ENCODE measurements at regions of chr1 and their contacts with region 1.

Region 1: GRCh38 chr1:109099938-109100773 is 9.6 kb downstream of the TMEM167B start:
- DNase-seq: peak; percentile 98
- ATAC-seq: peak; percentile 94
- H3K4me3 Mint-ChIP-seq: peak overlapping the region; percentile 98
- H3K27ac Mint-ChIP-seq: peak overlapping the region; percentile 98
- H3K4me1 Mint-ChIP-seq: peaks cover 6% of the 10 kb centered on the region
- H3K27me3 Mint-ChIP-seq: no peaks in the 10 kb centered on the region

Region 2: DNA sequence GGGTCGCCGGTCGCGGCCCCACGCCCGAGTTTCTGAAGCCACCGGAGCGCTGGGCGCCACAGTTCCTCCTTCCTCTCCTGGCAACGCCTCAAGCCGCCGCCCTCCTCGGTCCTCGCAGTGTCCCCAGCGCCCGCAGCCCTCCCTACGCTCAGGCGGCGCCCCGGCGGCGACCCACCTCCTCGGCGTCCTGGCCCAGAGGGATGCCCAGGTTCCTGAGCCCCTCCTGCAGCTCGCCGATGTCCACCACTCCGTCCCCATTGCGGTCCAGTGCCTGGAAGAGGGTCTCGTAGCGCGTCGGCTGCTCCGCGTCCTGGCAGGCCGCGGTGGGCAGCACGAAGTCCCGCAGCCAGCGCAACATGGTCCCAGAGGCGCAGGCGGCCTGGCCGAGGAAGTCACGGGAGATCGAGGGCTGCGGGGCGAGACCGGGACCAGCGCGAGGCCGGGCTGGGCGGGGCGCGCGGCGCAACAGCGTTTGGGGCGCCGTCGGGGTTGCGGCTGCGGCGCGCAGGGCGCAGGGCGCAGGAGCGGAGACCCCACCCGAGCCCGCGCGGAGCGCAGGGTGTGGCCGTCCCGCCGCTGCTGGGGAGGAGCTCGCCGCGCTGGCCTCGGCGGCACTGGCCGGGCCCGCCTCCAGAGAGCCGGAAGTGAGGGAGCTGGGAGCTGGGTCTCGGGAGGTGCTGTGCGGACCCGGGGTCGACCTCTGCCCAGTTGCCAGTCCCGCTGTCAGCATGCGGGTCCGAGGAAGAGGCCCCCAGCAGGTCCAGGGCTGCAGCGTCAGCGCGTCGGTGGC is 900.2 kb before region 1 on chr1 and contains the start of gene SLC25A24:
- CTCF ChIA-PET with region 1: no interaction called
- POLR2A ChIA-PET with region 1: no interaction called
- intact Hi-C with region 1: loop called in 1 of 2 experiments (anchors 10 kb)
- DNase-seq: peak; percentile 86
- ATAC-seq: peak; percentile 97
- H3K4me3 Mint-ChIP-seq: peak within 1 kb of the TSS; percentile 84
- H3K27ac Mint-ChIP-seq: peak within 1 kb of the TSS; percentile 78
- H3K4me1 Mint-ChIP-seq: peaks cover 26% of the 10 kb centered on the region
- H3K27me3 Mint-ChIP-seq: no peaks in the 10 kb centered on the region
- total RNA-seq, gene SLC25A24: 13.6 to 15.4 TPM

Region 3: GRCh38 chr1:108750476-108751181 is 349.5 kb before region 1 on chr1:
- CTCF ChIA-PET with region 1: no interaction called
- POLR2A ChIA-PET with region 1: no interaction called
- intact Hi-C with region 1: no loop called
- DNase-seq: no peak
- ATAC-seq: no peak
- H3K4me3 Mint-ChIP-seq: no peak overlapping the region
- H3K27ac Mint-ChIP-seq: no peak overlapping the region
- H3K4me1 Mint-ChIP-seq: peaks cover 34% of the 10 kb centered on the region
- H3K27me3 Mint-ChIP-seq: no peaks in the 10 kb centered on the region

Region 4: DNA sequence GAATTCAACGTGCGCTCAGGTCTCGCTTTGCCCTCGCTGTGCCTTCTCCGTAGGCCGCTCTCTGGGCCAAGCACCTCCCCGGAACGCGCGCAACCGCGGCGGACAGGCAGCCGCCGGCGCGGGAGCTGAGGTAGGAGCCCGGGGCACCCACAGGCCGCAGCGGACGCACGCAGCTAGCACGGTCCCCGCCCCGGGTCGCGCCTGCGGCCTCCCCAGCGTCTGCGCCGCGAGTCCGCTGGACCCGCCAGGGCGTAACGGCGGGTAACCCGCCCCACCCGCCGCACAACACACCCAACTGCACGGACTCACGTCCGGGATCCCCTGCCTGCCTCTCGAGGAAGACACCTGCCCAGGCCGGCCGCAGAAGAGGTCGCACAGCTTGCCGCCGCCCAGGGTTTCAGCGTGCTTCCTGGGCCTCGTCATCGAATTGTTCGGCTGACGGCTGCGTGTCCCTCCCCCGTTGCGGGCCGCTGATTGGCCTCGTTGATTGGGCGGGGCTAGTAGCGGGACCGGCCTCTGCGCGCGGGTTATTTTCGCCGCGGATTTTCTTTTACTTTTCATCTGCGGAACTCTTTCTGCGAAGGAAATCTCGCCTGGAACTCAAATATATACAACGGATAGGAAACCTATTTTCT is 137.0 kb before region 1 on chr1 and contains the start of gene CLCC1:
- CTCF ChIA-PET with region 1: interaction called, 3 read pairs
- POLR2A ChIA-PET with region 1: no interaction called
- intact Hi-C with region 1: loop called in 1 of 2 experiments (anchors 1 kb)
- DNase-seq: peak; percentile 96
- ATAC-seq: peak; percentile 97
- H3K4me3 Mint-ChIP-seq: peak within 1 kb of the TSS; percentile 81
- H3K27ac Mint-ChIP-seq: peak within 1 kb of the TSS; percentile 91
- H3K4me1 Mint-ChIP-seq: peaks cover 26% of the 10 kb centered on the region
- H3K27me3 Mint-ChIP-seq: no peaks in the 10 kb centered on the region
- total RNA-seq, gene CLCC1: 15.7 to 17.1 TPM

Region 5: GRCh38 chr1:109041621-109042468 is 58.3 kb before region 1 on chr1 and contains the start of gene WDR47:
- CTCF ChIA-PET with region 1: interaction called, 10 read pairs
- POLR2A ChIA-PET with region 1: interaction called, 10 read pairs
- intact Hi-C with region 1: loop called in 1 of 2 experiments (anchors 1 kb)
- DNase-seq: peak; percentile 98
- ATAC-seq: peak; percentile 99
- H3K4me3 Mint-ChIP-seq: peak within 1 kb of the TSS; percentile 82
- H3K27ac Mint-ChIP-seq: peak within 1 kb of the TSS; percentile 65
- H3K4me1 Mint-ChIP-seq: peaks cover 16% of the 10 kb centered on the region
- H3K27me3 Mint-ChIP-seq: no peaks in the 10 kb centered on the region
- total RNA-seq, gene WDR47: 6.9 to 7.6 TPM

Region 6: DNA sequence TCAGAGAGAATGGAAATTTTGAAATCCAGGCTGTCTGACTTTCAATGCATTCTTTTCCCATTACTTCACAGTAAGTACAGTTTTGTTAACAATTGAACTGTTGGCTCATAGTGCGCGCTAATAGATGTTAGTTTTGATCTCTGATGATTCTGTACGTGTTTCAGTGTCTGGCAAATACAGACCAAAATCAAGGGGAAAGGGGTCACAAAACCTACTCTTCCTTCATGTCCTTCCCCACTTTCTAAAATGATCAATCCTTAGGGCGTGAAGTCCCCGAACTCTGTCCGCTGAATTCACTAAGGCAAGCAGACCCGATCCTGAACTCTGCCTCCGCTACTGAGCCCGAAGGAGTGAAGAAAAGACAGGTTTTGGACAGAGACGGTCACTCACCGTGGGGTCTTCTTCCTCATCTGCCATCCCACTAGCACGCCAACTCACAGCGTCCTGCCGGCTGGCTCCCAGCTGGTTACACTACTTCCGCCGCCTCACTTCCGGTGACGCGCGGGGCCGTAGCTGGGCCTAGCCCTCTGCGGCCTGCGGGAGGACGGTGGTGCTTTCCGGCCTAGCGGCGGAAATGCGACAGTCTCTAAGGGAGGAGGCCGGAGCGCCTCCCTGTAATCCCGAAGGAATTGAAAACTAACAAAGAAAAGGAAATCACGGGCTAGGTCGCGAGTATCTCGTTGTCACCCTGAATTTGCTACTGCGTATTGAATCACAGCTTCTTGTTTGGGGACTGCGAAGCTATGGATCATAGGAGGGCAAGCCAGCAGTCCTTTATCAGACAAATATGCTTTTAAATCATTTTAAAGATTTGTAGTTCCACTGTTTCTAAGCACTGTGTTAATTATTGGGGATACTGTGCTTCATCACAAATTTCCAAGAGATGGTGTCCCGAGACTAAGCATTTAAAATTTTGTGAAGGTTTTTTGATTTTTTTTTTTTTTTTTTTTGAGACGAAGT is 24.3 kb before region 1 on chr1 and contains the start of gene TAF13:
- CTCF ChIA-PET with region 1: interaction called, 5 read pairs
- POLR2A ChIA-PET with region 1: interaction called, 5 read pairs
- intact Hi-C with region 1: loop called in 1 of 2 experiments (anchors 1 kb)
- DNase-seq: peak; percentile 93
- ATAC-seq: peak; percentile 99
- H3K4me3 Mint-ChIP-seq: peak within 1 kb of the TSS; percentile 95
- H3K27ac Mint-ChIP-seq: peak within 1 kb of the TSS; percentile 94
- H3K4me1 Mint-ChIP-seq: peaks cover 10% of the 10 kb centered on the region
- H3K27me3 Mint-ChIP-seq: no peaks in the 10 kb centered on the region
- total RNA-seq, gene TAF13: 12.1 to 20.1 TPM

Region 7: GRCh38 chr1:109193653-109194590 is 93.8 kb after region 1 on chr1:
- CTCF ChIA-PET with region 1: interaction called, 6 read pairs
- POLR2A ChIA-PET with region 1: no interaction called
- intact Hi-C with region 1: loop called in 1 of 2 experiments (anchors 5 kb)
- DNase-seq: peak; percentile 80
- ATAC-seq: peak; percentile 62
- H3K4me3 Mint-ChIP-seq: no peak overlapping the region
- H3K27ac Mint-ChIP-seq: no peak overlapping the region
- H3K4me1 Mint-ChIP-seq: peaks cover 8% of the 10 kb centered on the region
- H3K27me3 Mint-ChIP-seq: no peaks in the 10 kb centered on the region

Region 8: GRCh38 chr1:109579491-109579890 is 479.3 kb after region 1 on chr1:
- CTCF ChIA-PET with region 1: no interaction called
- POLR2A ChIA-PET with region 1: no interaction called
- intact Hi-C with region 1: no loop called
- DNase-seq: no peak
- ATAC-seq: no peak
- H3K4me3 Mint-ChIP-seq: no peak overlapping the region
- H3K27ac Mint-ChIP-seq: no peak overlapping the region
- H3K4me1 Mint-ChIP-seq: peaks cover 3% of the 10 kb centered on the region
- H3K27me3 Mint-ChIP-seq: no peaks in the 10 kb centered on the region

Measured in activated CD4-positive, alpha-beta T cell treated with anti-CD3 and anti-CD28 coated beads for 36 hours (primary cell).